AG04449 (cell line): ENCODE measurements at regions of chr6 and their contacts with region 1.

Region 1: DNA sequence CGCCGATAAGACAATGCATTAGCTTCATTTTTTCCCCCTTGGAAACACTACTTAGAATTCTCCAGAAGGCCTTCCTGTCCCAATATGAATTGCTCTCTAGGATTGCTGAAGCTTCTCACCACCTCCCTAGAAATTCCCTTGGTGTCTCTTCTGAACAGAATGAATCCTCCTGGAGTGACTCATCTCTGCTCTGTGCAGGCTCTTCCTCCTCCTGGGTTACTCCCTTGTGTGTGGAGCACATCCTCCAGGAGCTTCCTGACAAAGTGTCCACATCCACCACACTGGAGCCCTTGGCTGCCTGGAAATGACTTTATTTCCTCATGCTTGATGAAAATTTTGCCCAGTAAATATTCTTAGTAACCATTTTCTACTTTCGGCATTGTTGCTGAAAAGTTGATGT is 54.4 kb downstream of the DTNBP1 start:
- DNase-seq: peak; percentile 34
- H3K4me3 ChIP-seq: no peak overlapping the region
- CTCF ChIP-seq: no peak

Region 2: GRCh38 chr6:15621203-15622044 is 13.0 kb after region 1 on chr6:
- CTCF ChIA-PET with region 1: interaction called, 44 read pairs
- POLR2A ChIA-PET with region 1: no interaction called
- DNase-seq: no peak
- H3K4me3 ChIP-seq: no peak overlapping the region
- CTCF ChIP-seq: no peak

Region 3: DNA sequence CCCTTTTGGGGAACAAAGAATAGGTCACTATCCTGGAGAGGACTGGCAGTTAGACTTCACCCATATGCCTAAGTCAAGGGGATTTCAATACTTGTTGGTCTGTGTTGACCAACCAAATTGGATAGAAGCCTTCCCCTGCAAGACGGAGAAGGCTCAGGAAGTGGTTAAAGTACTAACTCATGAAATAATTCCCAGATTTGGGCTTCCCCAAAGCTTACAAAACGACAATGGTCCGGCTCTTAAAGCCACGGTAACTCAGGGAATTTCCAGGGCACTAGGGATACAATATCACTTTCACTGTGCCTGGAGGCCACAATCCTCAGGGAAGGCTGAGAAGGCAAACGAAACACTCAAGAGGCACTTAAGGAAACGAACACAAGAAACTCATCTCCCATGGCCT is 853.1 kb after region 1 on chr6:
- CTCF ChIA-PET with region 1: no interaction called
- POLR2A ChIA-PET with region 1: no interaction called
- DNase-seq: no peak
- H3K4me3 ChIP-seq: no peak overlapping the region
- CTCF ChIP-seq: no peak